ENCODE measurements at regions of chr6 and their contacts with region 1.

Region 1: DNA sequence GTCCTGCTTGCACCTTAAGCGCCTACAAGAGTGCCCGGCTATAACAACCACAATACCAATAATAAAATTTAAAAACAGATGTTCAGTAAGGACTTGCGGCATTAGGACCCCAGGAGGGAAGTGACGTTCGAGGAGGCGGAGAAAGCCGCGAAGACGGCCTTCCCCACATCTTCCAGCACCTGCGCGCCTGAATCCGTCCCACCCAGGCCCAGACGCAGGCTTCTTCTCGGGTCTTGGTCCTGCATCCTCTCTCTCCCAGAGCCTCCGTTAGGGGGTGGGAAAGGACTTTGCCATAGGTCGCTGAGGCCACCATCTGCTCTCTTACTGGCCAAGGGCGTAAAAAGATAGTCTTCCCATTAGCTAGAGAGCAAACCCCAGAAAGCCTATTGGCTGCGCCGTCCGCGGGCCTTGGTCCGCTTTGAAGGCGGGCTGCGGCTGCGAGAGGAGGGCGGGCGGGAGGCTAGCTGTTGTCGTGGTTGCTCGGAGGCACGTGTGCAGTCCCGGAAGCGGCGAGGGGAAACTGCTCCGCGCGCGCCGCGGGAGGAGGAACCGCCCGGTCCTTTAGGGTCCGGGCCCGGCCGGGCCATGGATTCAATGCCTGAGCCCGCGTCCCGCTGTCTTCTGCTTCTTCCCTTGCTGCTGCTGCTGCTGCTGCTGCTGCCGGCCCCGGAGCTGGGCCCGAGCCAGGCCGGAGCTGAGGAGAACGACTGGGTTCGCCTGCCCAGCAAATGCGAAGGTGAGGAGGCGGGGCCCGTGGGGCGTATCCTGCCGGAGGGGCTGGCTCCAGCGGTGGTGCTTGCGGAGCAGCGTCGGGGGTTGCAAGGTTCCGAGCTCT is at the start of gene CNPY3:
- DNase-seq: peak; percentile 92
- H3K4me3 ChIP-seq: peak within 1 kb of the TSS; percentile 71 to 78
- H3K27ac ChIP-seq: peak within 1 kb of the TSS; percentile 92 to 93
- H3K4me1 ChIP-seq: peaks cover 0 to 15% of the 10 kb centered on the region in 2 experiments; a peak in 1 of 4 replicates
- H3K27me3 ChIP-seq: no peaks in the 10 kb centered on the region
- CTCF ChIP-seq: no peak
- EP300 ChIP-seq: no peak
- RAD21 ChIP-seq: no peak
- polyA plus RNA-seq, gene CNPY3: 59.2 and 77.5 TPM in 2 replicates

Region 2: DNA sequence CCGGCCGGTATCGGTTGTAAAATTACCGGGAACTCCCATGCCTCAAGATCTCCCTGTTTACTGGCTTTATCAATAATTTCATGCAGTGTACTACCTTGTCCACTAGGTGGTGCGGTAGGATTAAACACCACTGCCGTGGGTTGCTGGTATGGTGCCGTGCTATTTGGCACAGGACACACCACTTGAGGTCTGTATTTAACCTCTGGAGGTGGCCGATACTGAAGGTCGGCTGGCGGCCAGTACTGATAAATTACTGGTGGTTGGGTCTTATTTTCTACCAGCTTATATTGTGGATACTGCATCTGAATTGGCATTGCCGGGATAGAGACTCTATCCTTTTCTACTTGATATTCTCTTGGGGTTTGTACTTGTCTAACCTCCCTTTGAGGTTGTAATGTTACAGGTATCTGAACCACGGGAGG is 27.7 kb before region 1 on chr6:
- CTCF ChIA-PET with region 1: interaction called, 11 read pairs
- POLR2A ChIA-PET with region 1: no interaction called
- DNase-seq: peak; percentile 72
- H3K4me3 ChIP-seq: peak overlapping the region in 1 of 2 experiments; percentile 20; a peak in 1 of 4 replicates
- H3K27ac ChIP-seq: no peak overlapping the region
- H3K4me1 ChIP-seq: peaks cover 0 to 9% of the 10 kb centered on the region in 2 experiments; a peak in 2 of 4 replicates
- H3K27me3 ChIP-seq: no peaks in the 10 kb centered on the region
- CTCF ChIP-seq: peak; percentile 89
- EP300 ChIP-seq: no peak
- RAD21 ChIP-seq: peak; percentile 97

Region 3: DNA sequence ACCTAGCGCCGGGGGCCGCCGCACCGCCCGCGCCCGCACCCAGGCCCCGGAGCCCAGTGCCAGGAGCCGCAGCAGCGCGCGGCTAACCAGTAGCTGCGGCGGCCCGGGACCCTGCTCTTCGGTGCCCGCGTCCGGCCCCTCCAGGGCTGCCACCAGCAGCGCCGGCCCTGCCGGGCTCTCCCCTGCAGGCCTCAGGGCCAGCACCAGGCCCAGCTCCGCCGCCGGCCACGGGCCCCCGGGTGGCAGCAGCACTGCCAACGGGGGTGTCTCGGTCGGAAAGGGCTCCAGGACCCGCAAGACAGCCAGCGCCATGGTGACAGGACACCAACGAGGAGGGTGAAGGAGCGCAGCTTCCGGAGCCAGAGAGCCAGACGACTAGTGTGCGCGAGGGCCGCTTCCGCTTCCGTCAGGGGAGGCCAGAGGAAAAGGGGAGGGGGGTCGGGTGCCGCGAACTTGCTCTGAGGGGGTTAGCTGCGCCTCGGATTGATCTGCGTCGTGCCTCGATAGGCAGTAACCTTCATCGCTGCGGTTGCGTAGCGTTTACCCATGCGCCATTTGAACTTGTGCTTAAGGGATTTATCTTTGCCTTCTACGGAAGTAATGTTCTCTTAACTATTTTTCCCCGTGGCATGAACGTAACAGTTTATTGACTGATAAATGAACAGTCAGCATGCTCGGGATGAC is 49.8 kb after region 1 on chr6 and contains the start of gene PEX6:
- CTCF ChIA-PET with region 1: interaction called, 4 read pairs
- POLR2A ChIA-PET with region 1: interaction called, 16 read pairs
- DNase-seq: peak; percentile 96
- H3K4me3 ChIP-seq: peak within 1 kb of the TSS; percentile 66 to 81
- H3K27ac ChIP-seq: peak within 1 kb of the TSS; percentile 80 to 86
- H3K4me1 ChIP-seq: peaks cover 0 to 10% of the 10 kb centered on the region in 2 experiments; a peak in 2 of 4 replicates
- H3K27me3 ChIP-seq: no peaks in the 10 kb centered on the region
- CTCF ChIP-seq: no peak
- EP300 ChIP-seq: 0 out of 4 replicates have a peak, but pooled peaks of 1 of the 2 experiments have one; percentile 7
- RAD21 ChIP-seq: no peak
- polyA plus RNA-seq, gene PEX6: 12.5 and 15.3 TPM in 2 replicates

Region 4: GRCh38 chr6:42984001-42984923 is 55.1 kb after region 1 on chr6 and contains the start of gene PPP2R5D:
- CTCF ChIA-PET with region 1: interaction called, 4 read pairs
- POLR2A ChIA-PET with region 1: interaction called, 16 read pairs
- DNase-seq: peak; percentile 94
- H3K4me3 ChIP-seq: peak within 1 kb of the TSS; percentile 69 to 70
- H3K27ac ChIP-seq: peak within 1 kb of the TSS; percentile 66 to 93
- H3K4me1 ChIP-seq: peaks cover 20 to 24% of the 10 kb centered on the region in 2 experiments; a peak in 3 of 4 replicates
- H3K27me3 ChIP-seq: no peaks in the 10 kb centered on the region
- CTCF ChIP-seq: no peak
- EP300 ChIP-seq: no peak
- RAD21 ChIP-seq: no peak
- polyA plus RNA-seq, gene PPP2R5D: 37.6 and 38.6 TPM in 2 replicates